ENCODE measurements at regions of chr5 and their contacts with region 1.

Region 1: DNA sequence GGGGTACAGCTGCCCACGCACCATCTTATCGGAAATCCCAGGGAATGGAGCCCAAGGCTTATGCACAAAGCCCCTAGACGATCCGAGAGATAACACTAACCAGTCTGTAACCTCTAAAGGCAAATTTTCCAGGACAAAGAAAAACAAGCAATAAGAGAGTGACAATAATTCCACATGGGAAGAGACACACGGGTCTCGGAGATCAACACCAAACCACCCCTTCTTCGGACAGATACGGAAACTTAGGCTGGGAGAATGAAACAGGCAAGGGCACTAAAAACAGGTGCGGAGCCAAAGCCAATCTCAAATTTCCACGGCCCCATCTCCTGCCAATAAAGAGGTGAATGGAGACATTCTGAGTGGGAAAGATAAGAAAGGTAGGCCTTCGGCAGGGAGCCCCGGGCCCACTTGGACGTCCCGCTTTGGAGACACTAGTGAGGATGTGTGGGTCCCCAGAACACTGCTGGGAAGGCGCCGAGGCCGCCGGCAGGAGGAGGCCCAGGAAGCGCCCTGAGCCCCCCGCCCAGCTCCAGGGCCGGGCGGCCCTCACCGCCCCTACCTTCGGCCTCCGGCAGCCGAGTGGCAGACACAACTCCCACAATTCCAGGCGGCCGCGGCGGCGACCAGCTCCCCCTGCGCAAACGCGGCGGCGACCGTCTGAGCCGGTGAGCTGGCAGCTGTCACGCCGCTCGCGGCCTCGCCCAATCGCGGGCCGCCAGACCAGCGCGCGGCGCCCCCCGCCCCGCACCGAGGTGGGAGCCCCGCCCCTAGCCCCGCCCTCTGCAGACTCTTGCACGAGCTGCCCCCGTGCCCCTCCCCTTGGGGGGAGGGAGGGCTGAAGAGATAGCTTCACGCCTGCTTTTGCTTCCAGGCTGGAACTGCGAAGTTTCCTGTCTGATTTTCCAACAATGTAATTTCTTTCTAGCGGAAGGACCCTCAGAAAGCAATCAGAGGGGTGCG is at the start of gene SIL1:
- DNase-seq: peak; percentile 98
- H3K4me3 Mint-ChIP-seq: peak within 1 kb of the TSS; percentile 84
- H3K27ac Mint-ChIP-seq: peak within 1 kb of the TSS; percentile 93
- H3K4me1 Mint-ChIP-seq: peaks cover 17% of the 10 kb centered on the region
- H3K27me3 Mint-ChIP-seq: no peaks in the 10 kb centered on the region
- CTCF ChIP-seq: no peak
- total RNA-seq, gene SIL1: 114 and 175 TPM in 2 replicates

Region 2: GRCh38 chr5:139012170-139012569 is 185.8 kb before region 1 on chr5:
- CTCF ChIA-PET with region 1: no interaction called
- POLR2A ChIA-PET with region 1: interaction called, 10 read pairs
- intact Hi-C with region 1: no loop called
- DNase-seq: no peak
- H3K4me3 Mint-ChIP-seq: peak overlapping the region; percentile 73
- H3K27ac Mint-ChIP-seq: no peak overlapping the region
- H3K4me1 Mint-ChIP-seq: peaks cover 22% of the 10 kb centered on the region
- H3K27me3 Mint-ChIP-seq: no peaks in the 10 kb centered on the region
- CTCF ChIP-seq: no peak

Region 3: GRCh38 chr5:139147483-139148087 is 50.4 kb before region 1 on chr5:
- CTCF ChIA-PET with region 1: no interaction called
- POLR2A ChIA-PET with region 1: interaction called, 11 read pairs
- intact Hi-C with region 1: no loop called
- DNase-seq: peak; percentile 94
- H3K4me3 Mint-ChIP-seq: no peak overlapping the region
- H3K27ac Mint-ChIP-seq: no peak overlapping the region
- H3K4me1 Mint-ChIP-seq: peaks cover 33% of the 10 kb centered on the region
- H3K27me3 Mint-ChIP-seq: no peaks in the 10 kb centered on the region
- CTCF ChIP-seq: no peak

Region 4: GRCh38 chr5:139177809-139178588 is 20.0 kb before region 1 on chr5:
- CTCF ChIA-PET with region 1: interaction called, 5 read pairs
- POLR2A ChIA-PET with region 1: interaction called, 24 read pairs
- intact Hi-C with region 1: no loop called
- DNase-seq: peak; percentile 33
- H3K4me3 Mint-ChIP-seq: no peak overlapping the region
- H3K27ac Mint-ChIP-seq: peak overlapping the region; percentile 63
- H3K4me1 Mint-ChIP-seq: peaks cover 49% of the 10 kb centered on the region
- H3K27me3 Mint-ChIP-seq: no peaks in the 10 kb centered on the region
- CTCF ChIP-seq: no peak

Region 5: GRCh38 chr5:139186752-139187659 is 11.0 kb before region 1 on chr5:
- CTCF ChIA-PET with region 1: interaction called, 5 read pairs
- POLR2A ChIA-PET with region 1: interaction called, 15 read pairs
- intact Hi-C with region 1: no loop called
- DNase-seq: no peak
- H3K4me3 Mint-ChIP-seq: no peak overlapping the region
- H3K27ac Mint-ChIP-seq: no peak overlapping the region
- H3K4me1 Mint-ChIP-seq: peaks cover 13% of the 10 kb centered on the region
- H3K27me3 Mint-ChIP-seq: no peaks in the 10 kb centered on the region
- CTCF ChIP-seq: no peak

Region 6: DNA sequence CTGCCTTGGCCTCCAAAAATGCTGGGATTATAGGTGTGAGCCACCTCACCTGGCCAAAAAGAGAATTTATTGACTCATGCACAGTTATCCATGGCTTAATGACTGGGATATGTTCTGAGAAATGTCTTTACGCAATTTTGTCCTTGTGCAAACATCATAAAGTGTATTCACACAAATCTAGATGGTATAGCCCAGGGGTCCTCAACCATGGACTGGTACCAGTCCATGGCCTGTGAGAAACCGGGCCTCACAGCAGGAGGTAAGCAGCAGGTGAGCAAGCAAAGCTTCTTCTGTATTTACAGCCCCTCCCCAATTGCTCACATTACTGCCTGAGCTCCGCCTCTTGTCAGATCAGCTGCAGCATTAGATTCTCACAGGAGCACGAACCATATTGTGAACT is 12.6 kb after region 1 on chr5:
- CTCF ChIA-PET with region 1: interaction called, 5 read pairs
- POLR2A ChIA-PET with region 1: interaction called, 23 read pairs
- intact Hi-C with region 1: no loop called
- DNase-seq: peak; percentile 21
- H3K4me3 Mint-ChIP-seq: no peak overlapping the region
- H3K27ac Mint-ChIP-seq: no peak overlapping the region
- H3K4me1 Mint-ChIP-seq: no peaks in the 10 kb centered on the region
- H3K27me3 Mint-ChIP-seq: no peaks in the 10 kb centered on the region
- CTCF ChIP-seq: no peak

Region 7: GRCh38 chr5:139232147-139232724 is 34.2 kb after region 1 on chr5:
- CTCF ChIA-PET with region 1: interaction called, 4 read pairs
- POLR2A ChIA-PET with region 1: interaction called, 19 read pairs
- intact Hi-C with region 1: no loop called
- DNase-seq: peak; percentile 84
- H3K4me3 Mint-ChIP-seq: no peak overlapping the region
- H3K27ac Mint-ChIP-seq: peak overlapping the region; percentile 61
- H3K4me1 Mint-ChIP-seq: peaks cover 5% of the 10 kb centered on the region
- H3K27me3 Mint-ChIP-seq: no peaks in the 10 kb centered on the region
- CTCF ChIP-seq: no peak

Region 8: GRCh38 chr5:139474890-139475791 is 277.2 kb after region 1 on chr5:
- CTCF ChIA-PET with region 1: no interaction called
- POLR2A ChIA-PET with region 1: no interaction called
- intact Hi-C with region 1: no loop called
- DNase-seq: peak; percentile 47
- H3K4me3 Mint-ChIP-seq: no peak overlapping the region
- H3K27ac Mint-ChIP-seq: no peak overlapping the region
- H3K4me1 Mint-ChIP-seq: peaks cover 15% of the 10 kb centered on the region
- H3K27me3 Mint-ChIP-seq: no peaks in the 10 kb centered on the region
- CTCF ChIP-seq: no peak

Measured in MCF 10A (cell line).